ENCODE measurements at regions of chr6 and their contacts with region 1.

Region 1: DNA sequence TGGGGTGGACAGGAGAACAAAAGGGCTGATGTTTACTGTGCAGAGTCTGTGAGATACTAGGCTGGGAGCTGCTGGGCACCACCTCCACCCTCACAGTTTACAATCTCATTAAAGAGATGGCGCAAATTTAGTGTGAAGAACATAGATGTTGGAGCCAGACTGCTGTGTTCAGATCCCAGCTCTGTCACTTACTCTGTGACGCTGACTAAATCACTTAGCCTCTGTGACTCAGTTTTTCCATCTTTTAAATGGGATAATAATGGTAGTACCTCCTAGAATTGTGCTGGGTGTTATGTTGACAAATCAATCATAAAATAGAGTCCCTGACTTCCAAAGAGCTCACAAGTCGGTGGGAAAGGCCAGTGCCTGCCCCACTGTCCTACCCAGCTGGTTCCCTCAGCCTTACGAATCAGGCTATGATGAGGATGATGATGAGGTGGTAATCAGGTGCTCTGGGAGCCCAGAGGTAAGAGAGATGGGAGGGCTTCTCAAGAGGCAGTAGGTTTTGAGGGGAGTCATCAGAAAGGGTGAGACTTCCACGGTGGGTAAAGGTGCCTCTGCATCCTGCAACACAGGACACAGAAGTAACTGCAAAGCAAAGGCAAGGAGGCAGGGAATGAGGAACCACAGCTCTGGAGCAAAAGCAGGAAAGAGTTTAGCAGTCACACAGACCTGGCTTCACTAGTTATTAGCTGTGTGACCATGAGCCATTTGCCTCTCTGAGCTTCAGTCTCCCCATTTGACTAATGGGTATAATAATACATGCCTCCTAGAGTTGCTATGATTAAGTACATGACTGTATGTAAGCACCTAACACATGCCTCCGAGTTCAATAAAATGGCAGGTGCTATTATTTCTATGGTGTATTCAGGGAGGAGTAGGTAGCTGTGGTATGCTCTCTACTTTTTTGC is 8.9 kb downstream of the FYN start:
- DNase-seq: no peak
- ATAC-seq: no peak
- H3K4me3 ChIP-seq: no peak overlapping the region
- H3K4me3 Mint-ChIP-seq: peak overlapping the region; percentile 71
- H3K27ac ChIP-seq: no peak overlapping the region
- H3K27ac Mint-ChIP-seq: peak overlapping the region; percentile 93
- H3K4me1 ChIP-seq: peaks cover 75% of the 10 kb centered on the region
- H3K4me1 Mint-ChIP-seq: peaks cover 100% of the 10 kb centered on the region
- H3K27me3 ChIP-seq: no peaks in the 10 kb centered on the region
- H3K27me3 Mint-ChIP-seq: no peaks in the 10 kb centered on the region
- CTCF ChIP-seq: no peak

Region 2: GRCh38 chr6:111812060-111813038 is 52.0 kb before region 1 on chr6:
- CTCF ChIA-PET with region 1: no interaction called
- POLR2A ChIA-PET with region 1: no interaction called
- intact Hi-C with region 1: loop called in 1 of 2 experiments (anchors 2 kb)
- DNase-seq: peak in 3 of 14 experiments; percentile 22 to 49 (median 37)
- ATAC-seq: peak; percentile 21
- H3K4me3 ChIP-seq: no peak overlapping the region
- H3K4me3 Mint-ChIP-seq: peak overlapping the region; percentile 46
- H3K27ac ChIP-seq: peak overlapping the region in 1 of 2 donors; percentile 43
- H3K27ac Mint-ChIP-seq: peak overlapping the region; percentile 91
- H3K4me1 ChIP-seq: peaks cover 57% of the 10 kb centered on the region
- H3K4me1 Mint-ChIP-seq: peaks cover 90% of the 10 kb centered on the region
- H3K27me3 ChIP-seq: no peaks in the 10 kb centered on the region
- H3K27me3 Mint-ChIP-seq: no peaks in the 10 kb centered on the region
- CTCF ChIP-seq: no peak

Region 3: GRCh38 chr6:111850295-111850937 is 14.0 kb before region 1 on chr6:
- CTCF ChIA-PET with region 1: interaction called, 5 read pairs
- POLR2A ChIA-PET with region 1: interaction called, 6 read pairs
- intact Hi-C with region 1: loop called in 1 of 2 experiments (anchors 1 kb)
- DNase-seq: peak in 3 of 14 experiments; percentile 63 to 67 (median 63)
- ATAC-seq: peak; percentile 51
- H3K4me3 ChIP-seq: no peak overlapping the region
- H3K4me3 Mint-ChIP-seq: peak overlapping the region; percentile 78
- H3K27ac ChIP-seq: peak overlapping the region in 1 of 2 donors; percentile 50
- H3K27ac Mint-ChIP-seq: no peak overlapping the region
- H3K4me1 ChIP-seq: peaks cover 72% of the 10 kb centered on the region
- H3K4me1 Mint-ChIP-seq: peaks cover 66% of the 10 kb centered on the region
- H3K27me3 ChIP-seq: no peaks in the 10 kb centered on the region
- H3K27me3 Mint-ChIP-seq: no peaks in the 10 kb centered on the region
- CTCF ChIP-seq: no peak